Activated T-helper 2 cell treated with anti-CD3 and anti-CD28 coated beads, Interferon-gamma antibody, Interleukin-2, Interleukin-4, amounts not matched to agents 10 μg/mL and 5 μg/mL and 100 μg/mL, durations not matched to agents 14 hours and 24 hours and 36 hours (primary cell): ENCODE measurements at regions of chr1 and their contacts with region 1.

Region 1: DNA sequence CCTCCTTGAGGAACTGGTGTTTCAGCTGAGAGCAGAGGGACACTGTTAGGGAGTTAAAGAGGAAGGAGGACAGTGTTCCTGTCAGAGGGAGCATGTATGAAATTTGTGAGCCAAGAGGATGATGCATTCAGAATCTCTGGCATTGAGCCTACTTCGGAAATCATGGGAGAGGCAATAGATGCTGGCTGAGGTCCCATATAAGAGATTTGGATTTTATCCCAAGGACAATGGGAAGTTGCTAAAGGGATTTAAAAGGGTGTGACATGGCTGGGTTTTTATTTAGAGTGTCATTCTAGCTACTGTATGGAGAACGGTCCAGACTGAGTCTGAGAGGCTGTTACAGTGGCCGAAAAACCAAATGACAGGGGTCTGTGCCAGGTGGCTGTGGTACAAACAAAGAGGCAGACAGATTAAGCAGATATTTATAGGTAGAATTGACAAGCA is 403.2 kb upstream of the B3GALT2 start:
- DNase-seq: no peak
- H3K4me3 Mint-ChIP-seq: no peak overlapping the region
- H3K27ac Mint-ChIP-seq: no peak overlapping the region
- H3K4me1 Mint-ChIP-seq: peaks cover 21% of the 10 kb centered on the region
- H3K27me3 Mint-ChIP-seq: no peaks in the 10 kb centered on the region

Region 2: GRCh38 chr1:193471981-193472380 is 117.6 kb before region 1 on chr1:
- intact Hi-C with region 1: no loop called
- DNase-seq: no peak
- H3K4me3 Mint-ChIP-seq: no peak overlapping the region
- H3K27ac Mint-ChIP-seq: no peak overlapping the region
- H3K4me1 Mint-ChIP-seq: peaks cover 23% of the 10 kb centered on the region
- H3K27me3 Mint-ChIP-seq: no peaks in the 10 kb centered on the region

Region 3: GRCh38 chr1:193574913-193575312 is 14.7 kb before region 1 on chr1:
- intact Hi-C with region 1: no loop called
- DNase-seq: no peak
- H3K4me3 Mint-ChIP-seq: no peak overlapping the region
- H3K27ac Mint-ChIP-seq: no peak overlapping the region
- H3K4me1 Mint-ChIP-seq: peaks cover 9% of the 10 kb centered on the region
- H3K27me3 Mint-ChIP-seq: peaks cover 2% of the 10 kb centered on the region

Region 4: GRCh38 chr1:193674292-193674944 is 84.8 kb after region 1 on chr1:
- intact Hi-C with region 1: loop called (anchors 5 kb)
- DNase-seq: no peak
- H3K4me3 Mint-ChIP-seq: no peak overlapping the region
- H3K27ac Mint-ChIP-seq: peak overlapping the region; percentile 61
- H3K4me1 Mint-ChIP-seq: peaks cover 22% of the 10 kb centered on the region
- H3K27me3 Mint-ChIP-seq: no peaks in the 10 kb centered on the region